Heart left ventricle (tissue), 16 donors: ENCODE measurements at regions of chr1 and their contacts with region 1.

Region 1: GRCh38 chr1:84772428-84772943 is 82.2 kb upstream of the SSX2IP start:
- DNase-seq: peak; percentile 73 to 79 (median 76)
- ATAC-seq: peak; percentile 78 to 91 (median 88)
- H3K4me3 ChIP-seq: no peak overlapping the region
- H3K27ac ChIP-seq: no peak overlapping the region
- H3K4me1 ChIP-seq: peaks cover 0 to 3% (median 0%) of the 10 kb centered on the region in 12 donors
- H3K27me3 ChIP-seq: peaks cover 0 to 8% (median 0%) of the 10 kb centered on the region in 9 donors
- CTCF ChIP-seq: peak; percentile 82 to 96 (median 94)
- POLR2A ChIP-seq: no peak

Region 2: GRCh38 chr1:84795966-84796600 is 23.6 kb after region 1 on chr1:
- intact Hi-C with region 1: no loop called
- DNase-seq: no peak
- ATAC-seq: peak in 2 of 4 donors; percentile 54 to 72
- H3K4me3 ChIP-seq: no peak overlapping the region
- H3K27ac ChIP-seq: peak overlapping the region in 3 of 12 donors; percentile 14 to 50 (median 33)
- H3K4me1 ChIP-seq: peaks cover 0 to 11% (median 0%) of the 10 kb centered on the region in 12 donors
- H3K27me3 ChIP-seq: no peaks in the 10 kb centered on the region
- CTCF ChIP-seq: no peak
- POLR2A ChIP-seq: no peak

Region 3: GRCh38 chr1:84823511-84823910 is 51.0 kb after region 1 on chr1:
- intact Hi-C with region 1: no loop called
- DNase-seq: no peak
- ATAC-seq: peak in 2 of 4 donors; percentile 33 to 39
- H3K4me3 ChIP-seq: no peak overlapping the region
- H3K27ac ChIP-seq: no peak overlapping the region
- H3K4me1 ChIP-seq: peaks cover 0 to 7% (median 0%) of the 10 kb centered on the region in 12 donors
- H3K27me3 ChIP-seq: no peaks in the 10 kb centered on the region
- CTCF ChIP-seq: no peak
- POLR2A ChIP-seq: no peak

Region 4: DNA sequence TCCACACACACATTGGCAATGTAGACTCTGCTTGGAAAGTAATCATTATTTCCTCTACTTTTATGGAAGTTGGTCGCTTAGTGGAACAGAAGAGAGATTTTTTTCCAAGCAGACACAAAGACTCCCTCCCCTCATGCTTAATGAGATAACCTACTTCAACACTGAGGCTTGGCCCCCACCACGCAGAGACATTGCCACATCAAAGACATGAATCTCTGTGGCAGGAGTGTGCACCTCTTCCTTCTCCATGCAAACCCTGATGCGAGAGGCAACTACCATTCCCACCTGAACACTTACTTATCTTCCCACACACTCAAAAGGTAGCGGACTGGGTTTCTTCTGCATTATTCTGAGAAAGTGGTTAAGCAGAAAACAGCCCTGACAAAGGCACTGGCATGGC is 157.8 kb after region 1 on chr1:
- intact Hi-C with region 1: loop called in 7 of 10 experiments (anchors 5 to 10 kb)
- DNase-seq: no peak
- ATAC-seq: no peak
- H3K4me3 ChIP-seq: no peak overlapping the region
- H3K27ac ChIP-seq: no peak overlapping the region
- H3K4me1 ChIP-seq: no peaks in the 10 kb centered on the region
- H3K27me3 ChIP-seq: peaks cover 0 to 6% (median 0%) of the 10 kb centered on the region in 9 donors
- CTCF ChIP-seq: no peak
- POLR2A ChIP-seq: no peak

Region 5: GRCh38 chr1:84973498-84974334 is 201.2 kb after region 1 on chr1:
- intact Hi-C with region 1: no loop called
- DNase-seq: no peak
- ATAC-seq: no peak
- H3K4me3 ChIP-seq: no peak overlapping the region
- H3K27ac ChIP-seq: no peak overlapping the region
- H3K4me1 ChIP-seq: no peaks in the 10 kb centered on the region
- H3K27me3 ChIP-seq: no peaks in the 10 kb centered on the region
- CTCF ChIP-seq: no peak
- POLR2A ChIP-seq: no peak